WTC11 (cell line): ENCODE measurements at regions of chr18 and their contacts with region 1.

Region 1: GRCh38 chr18:23918401-23919032 is 96.0 kb upstream of the TTC39C start:
- DNase-seq: peak; percentile 88
- ATAC-seq: peak; percentile 83
- H3K4me3 Mint-ChIP-seq: no peak overlapping the region
- H3K27ac Mint-ChIP-seq: no peak overlapping the region; the same call in 1 of the 2 replicates
- H3K4me1 Mint-ChIP-seq: peaks cover 6% of the 10 kb centered on the region
- H3K27me3 Mint-ChIP-seq: no peaks in the 10 kb centered on the region
- CTCF ChIP-seq: peak; percentile 80

Region 2: DNA sequence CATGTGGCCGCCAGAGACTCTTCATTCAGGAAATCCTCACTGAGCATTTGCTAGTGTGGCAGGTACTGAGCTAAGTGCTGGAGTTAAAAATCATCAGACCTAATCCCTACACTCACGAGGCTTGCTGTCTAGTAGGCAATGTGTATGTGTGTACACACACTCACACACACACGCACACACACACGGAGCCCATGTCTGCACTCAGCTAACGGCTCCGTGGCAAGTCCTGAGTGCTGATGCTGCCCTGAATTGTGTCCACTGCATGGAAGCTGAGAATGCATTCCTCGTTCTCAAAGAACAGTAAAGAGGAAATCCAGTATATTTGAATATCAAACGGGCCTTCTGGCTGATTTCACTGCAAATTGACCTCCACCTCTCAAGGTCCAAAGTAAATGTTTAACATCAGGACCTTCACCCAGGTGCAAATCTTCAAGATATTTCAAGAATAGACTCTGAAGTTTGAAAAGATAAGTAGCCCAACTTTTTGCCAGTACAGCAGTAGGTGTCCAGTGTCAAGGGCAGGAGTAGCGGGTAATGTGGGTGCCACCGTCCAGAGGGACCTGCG is 40.1 kb before region 1 on chr18:
- CTCF ChIA-PET with region 1: no interaction called
- POLR2A ChIA-PET with region 1: no interaction called
- DNase-seq: no peak
- ATAC-seq: no peak
- H3K4me3 Mint-ChIP-seq: no peak overlapping the region
- H3K27ac Mint-ChIP-seq: no peak overlapping the region
- H3K4me1 Mint-ChIP-seq: peaks cover 23% of the 10 kb centered on the region
- H3K27me3 Mint-ChIP-seq: no peaks in the 10 kb centered on the region; the same call in 1 of the 2 replicates
- CTCF ChIP-seq: no peak

Region 3: GRCh38 chr18:23900994-23901393 is 17.5 kb before region 1 on chr18:
- CTCF ChIA-PET with region 1: interaction called, 15 read pairs
- POLR2A ChIA-PET with region 1: no interaction called
- DNase-seq: peak; percentile 20
- ATAC-seq: peak; percentile 68
- H3K4me3 Mint-ChIP-seq: no peak overlapping the region
- H3K27ac Mint-ChIP-seq: no peak overlapping the region
- H3K4me1 Mint-ChIP-seq: peaks cover 8% of the 10 kb centered on the region
- H3K27me3 Mint-ChIP-seq: no peaks in the 10 kb centered on the region
- CTCF ChIP-seq: no peak

Region 4: DNA sequence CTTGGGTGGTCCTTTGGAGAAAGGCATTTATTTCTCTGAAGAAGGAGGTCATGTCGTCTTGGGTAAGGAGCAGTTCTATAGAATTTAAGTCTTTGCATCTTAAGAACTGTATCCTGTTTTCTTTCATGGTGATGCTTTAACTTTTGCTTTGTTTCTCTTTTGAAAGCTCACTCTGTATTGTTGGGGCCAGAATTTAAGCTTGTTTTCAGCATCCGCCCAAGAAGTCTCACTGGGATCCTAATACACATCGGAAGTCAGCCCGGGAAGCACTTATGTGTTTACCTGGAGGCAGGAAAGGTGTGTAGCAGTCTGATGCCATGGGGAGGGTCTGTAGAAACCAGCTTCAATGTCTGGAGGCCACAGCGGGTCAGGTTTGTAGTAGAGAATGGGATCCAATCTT is 31.3 kb after region 1 on chr18:
- CTCF ChIA-PET with region 1: interaction called, 15 read pairs
- POLR2A ChIA-PET with region 1: no interaction called
- DNase-seq: no peak
- ATAC-seq: peak; percentile 82
- H3K4me3 Mint-ChIP-seq: 0 out of 2 replicates have a peak overlapping the region, but pooled peaks have one; percentile 3
- H3K27ac Mint-ChIP-seq: peak overlapping the region; percentile 89
- H3K4me1 Mint-ChIP-seq: peaks cover 53% of the 10 kb centered on the region
- H3K27me3 Mint-ChIP-seq: no peaks in the 10 kb centered on the region
- CTCF ChIP-seq: no peak

Region 5: DNA sequence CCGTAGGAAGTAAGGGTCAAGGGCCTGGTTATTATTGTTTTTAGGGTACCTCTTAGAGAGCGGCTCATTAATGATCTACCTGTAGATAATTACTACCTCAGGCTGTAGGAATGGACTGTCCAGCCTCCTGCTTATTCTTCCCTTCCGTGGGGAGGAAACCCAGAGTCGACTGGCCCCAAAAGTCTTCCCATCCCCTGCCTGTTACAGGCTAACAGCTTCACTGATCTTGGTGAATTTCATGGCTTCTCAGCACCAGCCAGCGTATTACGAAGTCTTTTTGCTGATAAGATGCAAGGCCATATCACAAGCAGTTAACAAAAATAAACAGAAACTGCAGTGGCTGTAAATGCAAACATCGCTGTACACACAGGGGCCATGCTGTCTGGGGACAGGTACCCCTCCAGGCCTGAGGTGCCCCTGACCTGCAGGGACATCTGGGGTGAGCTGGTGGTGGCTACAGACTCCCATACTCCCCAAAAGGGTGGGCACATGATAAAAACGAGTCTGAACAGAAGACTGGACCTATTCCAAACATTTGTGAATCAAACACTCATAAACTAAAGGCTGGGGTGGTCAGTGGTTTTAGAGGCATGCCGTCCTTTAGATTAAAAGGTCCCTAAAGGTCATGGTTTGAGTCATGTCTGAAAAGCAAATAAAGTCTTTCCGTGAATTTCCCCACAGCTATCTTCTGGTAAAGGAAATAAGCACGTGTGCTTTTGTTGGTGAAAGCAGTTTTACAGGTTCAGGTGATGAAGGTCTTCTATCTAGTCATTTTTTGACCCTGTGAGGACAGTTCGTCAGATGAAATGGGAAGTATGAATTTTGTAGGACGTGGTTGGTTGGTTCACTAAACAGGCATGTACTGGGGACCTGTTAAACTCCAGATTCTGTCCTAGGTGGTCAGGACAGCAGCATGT is 132.8 kb after region 1 on chr18:
- CTCF ChIA-PET with region 1: no interaction called
- POLR2A ChIA-PET with region 1: no interaction called
- DNase-seq: no peak
- ATAC-seq: no peak
- H3K4me3 Mint-ChIP-seq: no peak overlapping the region
- H3K27ac Mint-ChIP-seq: no peak overlapping the region
- H3K4me1 Mint-ChIP-seq: peaks cover 24% of the 10 kb centered on the region
- H3K27me3 Mint-ChIP-seq: no peaks in the 10 kb centered on the region
- CTCF ChIP-seq: no peak

Region 6: GRCh38 chr18:24112874-24113615 is 194.5 kb after region 1 on chr18:
- CTCF ChIA-PET with region 1: no interaction called
- POLR2A ChIA-PET with region 1: no interaction called
- DNase-seq: no peak
- ATAC-seq: no peak
- H3K4me3 Mint-ChIP-seq: no peak overlapping the region
- H3K27ac Mint-ChIP-seq: 0 out of 2 replicates have a peak overlapping the region, but pooled peaks have one; percentile 15
- H3K4me1 Mint-ChIP-seq: peaks cover 5% of the 10 kb centered on the region
- H3K27me3 Mint-ChIP-seq: no peaks in the 10 kb centered on the region
- CTCF ChIP-seq: no peak